Sigmoid colon (tissue), 7 donors: ENCODE measurements at regions of chr2 and their contacts with region 1.

Region 1: GRCh38 chr2:85524336-85524933 is 14.5 kb upstream of the MAT2A start:
- DNase-seq: no peak
- H3K4me3 ChIP-seq: no peak overlapping the region
- H3K27ac ChIP-seq: peak overlapping the region; percentile 67 to 75 (median 72)
- H3K4me1 ChIP-seq: peaks cover 0 to 22% (median 20%) of the 10 kb centered on the region in 4 donors
- H3K27me3 ChIP-seq: no peaks in the 10 kb centered on the region
- CTCF ChIP-seq: no peak
- EP300 ChIP-seq: no peak
- POLR2A ChIP-seq: no peak

Region 2: GRCh38 chr2:85470850-85471800 is 53.3 kb before region 1 on chr2:
- intact Hi-C with region 1: loop called (anchors 5 kb)
- DNase-seq: peak; percentile 61
- H3K4me3 ChIP-seq: no peak overlapping the region
- H3K27ac ChIP-seq: peak overlapping the region in 2 of 4 donors; percentile 12 to 58
- H3K4me1 ChIP-seq: peaks cover 0 to 24% (median 22%) of the 10 kb centered on the region in 4 donors
- H3K27me3 ChIP-seq: no peaks in the 10 kb centered on the region
- CTCF ChIP-seq: no peak
- EP300 ChIP-seq: no peak
- POLR2A ChIP-seq: no peak